PC-3 (cell line): ENCODE measurements at regions of chr1 and their contacts with region 1.

Region 1: DNA sequence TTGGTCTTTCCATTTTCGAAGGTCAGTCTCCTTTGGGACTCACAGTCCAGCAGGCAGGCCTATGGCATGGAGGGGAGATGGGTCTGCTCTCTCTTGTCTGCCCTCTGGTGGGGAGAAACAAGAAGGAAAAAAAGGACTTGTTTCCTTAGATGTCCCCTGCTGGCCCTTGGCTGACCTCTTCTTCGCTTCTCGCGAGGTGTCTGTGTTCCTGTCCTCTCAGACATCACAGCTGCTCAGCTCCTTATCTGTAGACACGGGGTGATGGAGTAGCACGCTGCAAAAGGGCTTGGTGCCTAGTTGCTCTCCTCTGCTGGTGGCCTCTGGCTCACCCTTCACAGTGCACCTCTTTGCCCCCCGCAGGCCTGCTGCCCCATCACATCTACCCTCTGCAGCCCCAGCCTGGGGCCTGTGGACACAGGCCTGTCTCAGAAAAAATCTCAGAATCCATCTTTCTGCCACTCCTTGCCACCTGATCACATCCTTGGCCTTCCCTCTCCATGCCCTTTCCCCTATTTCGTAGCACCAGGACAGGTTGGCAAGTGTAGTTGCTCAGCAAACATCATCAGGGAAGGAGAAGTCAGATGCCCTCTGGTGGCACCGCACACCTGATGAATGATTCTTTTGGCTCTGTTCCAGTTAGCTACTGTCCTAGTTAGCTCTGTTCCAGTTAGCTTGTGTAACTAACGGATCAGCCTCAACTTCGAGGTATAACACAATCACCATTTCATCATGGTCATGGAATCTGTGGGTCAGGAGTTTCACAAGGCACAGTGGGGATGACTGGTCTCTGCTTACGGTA is 18.7 kb upstream of the AK2 start:
- DNase-seq: peak; percentile 87
- ATAC-seq: peak; percentile 75
- H3K4me3 ChIP-seq: no peak overlapping the region
- H3K27ac ChIP-seq: peak overlapping the region; percentile 35
- H3K4me1 ChIP-seq: peaks cover 11% of the 10 kb centered on the region
- H3K27me3 ChIP-seq: no peaks in the 10 kb centered on the region
- CTCF ChIP-seq: peak; percentile 67

Region 2: DNA sequence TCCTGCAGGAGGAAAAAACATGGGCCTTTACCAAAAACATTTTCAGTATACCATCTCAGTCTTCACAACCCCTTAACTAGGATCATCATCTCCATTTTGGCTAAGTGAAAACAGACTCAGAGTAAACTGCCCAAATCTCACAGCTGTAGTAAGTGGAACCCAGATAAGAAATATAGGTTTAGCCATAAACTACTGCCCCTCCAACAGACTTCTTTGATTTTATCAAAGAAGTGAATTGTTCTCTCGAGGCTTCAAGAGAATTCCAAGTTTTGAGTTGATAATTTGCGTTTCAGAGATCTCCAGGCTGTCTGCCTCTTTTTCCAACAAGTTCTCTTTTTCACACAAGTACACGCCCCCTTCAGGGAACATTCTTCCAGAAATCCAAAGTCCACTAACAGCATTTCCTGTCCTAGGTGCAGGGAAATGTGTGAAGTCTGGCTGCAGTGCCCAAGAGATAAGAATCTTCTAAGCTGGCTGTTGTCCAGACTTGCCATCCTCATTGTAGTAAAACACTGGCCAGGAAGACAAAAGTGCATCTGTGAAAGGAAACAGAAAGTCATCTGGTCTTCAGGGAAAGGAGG is 121.6 kb before region 1 on chr1:
- CTCF ChIA-PET with region 1: interaction called, 3 read pairs
- POLR2A ChIA-PET with region 1: no interaction called
- intact Hi-C with region 1: loop called (anchors 2 kb)
- DNase-seq: peak; percentile 76
- ATAC-seq: peak; percentile 69
- H3K4me3 ChIP-seq: no peak overlapping the region
- H3K27ac ChIP-seq: peak overlapping the region; percentile 18; the same call in 1 of the 2 replicates
- H3K4me1 ChIP-seq: peaks cover 28% of the 10 kb centered on the region
- H3K27me3 ChIP-seq: no peaks in the 10 kb centered on the region
- CTCF ChIP-seq: no peak

Region 3: DNA sequence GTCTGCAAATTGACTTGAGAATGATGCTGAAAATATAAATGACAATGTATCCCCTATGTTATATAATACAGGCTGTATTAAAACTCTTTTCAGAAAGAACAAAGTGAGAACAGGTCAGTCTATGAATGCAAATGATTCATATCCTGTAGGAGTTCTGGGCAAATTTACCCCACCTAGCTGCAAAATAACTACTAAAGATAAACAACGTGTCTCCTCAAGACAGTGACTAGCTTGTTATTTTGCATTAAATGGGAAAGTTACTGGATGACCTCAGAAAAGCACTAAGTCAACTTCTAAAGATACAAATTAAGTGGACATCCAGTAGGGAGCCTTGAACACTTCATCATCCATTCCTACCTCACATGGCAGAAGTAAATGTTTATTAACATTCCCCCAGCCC is 101.9 kb before region 1 on chr1:
- CTCF ChIA-PET with region 1: interaction called, 3 read pairs
- POLR2A ChIA-PET with region 1: no interaction called
- intact Hi-C with region 1: loop called (anchors 2 kb)
- DNase-seq: peak; percentile 91
- ATAC-seq: peak; percentile 86
- H3K4me3 ChIP-seq: peak overlapping the region; percentile 3; the same call in 1 of the 2 replicates
- H3K27ac ChIP-seq: peak overlapping the region; percentile 93
- H3K4me1 ChIP-seq: peaks cover 38% of the 10 kb centered on the region
- H3K27me3 ChIP-seq: no peaks in the 10 kb centered on the region
- CTCF ChIP-seq: no peak

Region 4: GRCh38 chr1:33007190-33008050 is 48.0 kb before region 1 on chr1:
- CTCF ChIA-PET with region 1: interaction called, 6 read pairs
- POLR2A ChIA-PET with region 1: no interaction called
- intact Hi-C with region 1: loop called (anchors 2 kb)
- DNase-seq: peak; percentile 93
- ATAC-seq: peak; percentile 97
- H3K4me3 ChIP-seq: no peak overlapping the region
- H3K27ac ChIP-seq: peak overlapping the region; percentile 28
- H3K4me1 ChIP-seq: peaks cover 40% of the 10 kb centered on the region
- H3K27me3 ChIP-seq: no peaks in the 10 kb centered on the region
- CTCF ChIP-seq: peak; percentile 86

Region 5: DNA sequence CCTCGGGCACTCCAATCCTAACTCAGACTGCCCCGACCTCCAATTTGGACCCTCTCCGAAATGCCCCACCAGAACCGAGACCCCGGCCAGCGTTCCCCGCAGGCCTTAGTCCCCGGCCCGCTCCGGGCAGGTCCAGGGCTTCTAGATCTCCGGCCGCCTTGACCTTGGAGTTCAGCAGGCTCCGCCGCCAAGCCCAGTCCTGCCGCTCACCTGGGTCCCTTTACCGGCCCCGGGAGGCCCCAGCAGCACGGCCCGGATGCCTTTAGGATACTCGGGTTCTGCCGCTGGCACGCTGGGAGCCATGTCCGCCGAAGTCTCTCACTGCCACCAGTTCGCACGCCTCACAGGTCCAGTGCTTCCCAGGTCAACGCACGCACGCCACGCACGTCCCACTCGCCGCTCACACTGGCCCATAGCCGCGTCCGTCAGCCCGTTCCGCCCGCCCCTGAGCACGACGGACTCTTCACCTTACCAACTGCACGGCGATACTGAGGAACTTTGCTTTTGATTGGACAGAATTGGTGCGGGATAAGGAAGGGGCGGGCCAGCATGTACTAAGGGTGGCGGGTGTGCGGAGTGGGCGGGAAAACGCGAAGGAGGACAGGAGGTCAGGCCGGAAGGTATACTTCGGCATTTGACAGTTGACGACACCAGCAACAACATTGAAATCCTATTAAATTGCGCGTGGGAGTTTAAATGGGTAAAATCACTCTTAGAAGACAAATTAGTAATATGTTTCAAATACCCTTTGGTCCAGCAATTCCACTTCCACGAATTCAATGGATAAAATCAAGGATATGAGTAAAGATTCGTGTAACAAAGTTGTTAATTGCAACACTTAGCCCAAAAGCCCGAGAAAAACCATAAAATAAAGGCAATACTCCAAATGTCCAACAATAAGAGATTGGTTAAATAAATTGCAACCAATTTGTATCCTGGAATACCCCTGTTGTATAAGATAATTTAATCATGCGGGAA is 18.6 kb before region 1 on chr1 and contains the start of gene AK2:
- CTCF ChIA-PET with region 1: no interaction called
- POLR2A ChIA-PET with region 1: no interaction called
- intact Hi-C with region 1: loop called (anchors 2 kb)
- DNase-seq: peak; percentile 98
- ATAC-seq: peak; percentile 99
- H3K4me3 ChIP-seq: peak within 1 kb of the TSS; percentile 91
- H3K27ac ChIP-seq: peak within 1 kb of the TSS; percentile 66
- H3K4me1 ChIP-seq: peaks cover 23% of the 10 kb centered on the region
- H3K27me3 ChIP-seq: no peaks in the 10 kb centered on the region
- CTCF ChIP-seq: no peak
- total RNA-seq, gene AK2: 213 and 236 TPM in 2 replicates

Region 6: GRCh38 chr1:33228935-33229487 is 173.6 kb after region 1 on chr1:
- CTCF ChIA-PET with region 1: no interaction called
- POLR2A ChIA-PET with region 1: interaction called, 14 read pairs
- intact Hi-C with region 1: no loop called
- DNase-seq: peak; percentile 34
- ATAC-seq: no peak
- H3K4me3 ChIP-seq: no peak overlapping the region
- H3K27ac ChIP-seq: no peak overlapping the region
- H3K4me1 ChIP-seq: no peaks in the 10 kb centered on the region
- H3K27me3 ChIP-seq: no peaks in the 10 kb centered on the region
- CTCF ChIP-seq: no peak